Adrenal gland (tissue), 19 donors: ENCODE measurements at regions of chr11 and their contacts with region 1.

Region 1: DNA sequence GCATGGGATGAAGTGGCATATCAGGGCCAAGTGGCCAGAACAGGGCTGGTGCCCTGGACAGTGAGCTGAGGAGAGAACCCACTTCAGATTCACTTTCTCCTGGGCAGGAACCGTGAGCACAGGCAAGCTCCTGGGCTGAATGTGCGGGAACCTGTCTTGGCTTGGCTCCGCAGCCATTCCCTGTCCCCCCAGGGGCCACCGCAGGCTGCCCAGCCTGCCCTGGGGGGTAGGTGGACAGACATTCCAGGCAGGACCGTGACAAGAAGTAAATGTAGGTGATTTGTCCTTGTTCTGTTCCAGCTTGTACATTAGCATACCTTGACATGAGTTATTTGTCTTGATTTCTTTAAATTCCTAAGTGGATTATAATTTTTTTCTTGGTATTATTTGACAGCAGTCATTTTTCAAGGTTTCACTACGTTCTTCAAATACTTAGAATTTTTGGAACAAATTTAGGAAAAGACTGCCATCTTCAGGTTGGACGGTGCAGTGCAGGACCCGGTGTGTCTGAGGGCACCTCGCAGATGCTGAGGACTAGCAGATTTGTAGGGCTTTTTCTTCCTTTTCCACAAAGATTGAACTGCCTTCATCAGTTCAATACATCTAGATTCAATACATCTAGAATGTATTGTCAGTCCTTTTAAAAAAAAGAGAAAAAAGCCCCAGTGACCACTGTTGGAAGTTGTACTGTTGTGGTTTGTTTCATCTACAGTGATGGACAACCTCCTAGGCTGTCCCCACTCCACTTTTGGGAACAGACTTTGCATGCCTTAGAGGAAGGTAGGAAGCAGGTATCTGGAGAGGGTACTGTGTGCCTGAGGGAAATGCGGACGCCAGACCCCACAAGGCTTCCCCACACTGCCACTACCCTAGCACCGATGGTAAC is 115.1 kb upstream of the RASSF10 start:
- DNase-seq: peak; percentile 44 to 89 (median 72)
- H3K4me3 ChIP-seq: no peak overlapping the region
- H3K27ac ChIP-seq: peak overlapping the region in 1 of 5 donors; percentile 65
- H3K4me1 ChIP-seq: peaks cover 3 to 14% of the 10 kb centered on the region in 2 donors
- H3K27me3 ChIP-seq: no peaks in the 10 kb centered on the region
- CTCF ChIP-seq: peak; percentile 80 to 93 (median 84)
- POLR2A ChIP-seq: no peak

Region 2: GRCh38 chr11:12331239-12331874 is 562.7 kb before region 1 on chr11:
- intact Hi-C with region 1: loop called (anchors 5 kb)
- DNase-seq: peak; percentile 75 to 95 (median 86)
- H3K4me3 ChIP-seq: no peak overlapping the region
- H3K27ac ChIP-seq: peak overlapping the region in 1 of 5 donors; percentile 15
- H3K4me1 ChIP-seq: peaks cover 0 to 3% of the 10 kb centered on the region in 2 donors
- H3K27me3 ChIP-seq: no peaks in the 10 kb centered on the region
- CTCF ChIP-seq: peak; percentile 65 to 88 (median 80)
- POLR2A ChIP-seq: no peak

Region 3: DNA sequence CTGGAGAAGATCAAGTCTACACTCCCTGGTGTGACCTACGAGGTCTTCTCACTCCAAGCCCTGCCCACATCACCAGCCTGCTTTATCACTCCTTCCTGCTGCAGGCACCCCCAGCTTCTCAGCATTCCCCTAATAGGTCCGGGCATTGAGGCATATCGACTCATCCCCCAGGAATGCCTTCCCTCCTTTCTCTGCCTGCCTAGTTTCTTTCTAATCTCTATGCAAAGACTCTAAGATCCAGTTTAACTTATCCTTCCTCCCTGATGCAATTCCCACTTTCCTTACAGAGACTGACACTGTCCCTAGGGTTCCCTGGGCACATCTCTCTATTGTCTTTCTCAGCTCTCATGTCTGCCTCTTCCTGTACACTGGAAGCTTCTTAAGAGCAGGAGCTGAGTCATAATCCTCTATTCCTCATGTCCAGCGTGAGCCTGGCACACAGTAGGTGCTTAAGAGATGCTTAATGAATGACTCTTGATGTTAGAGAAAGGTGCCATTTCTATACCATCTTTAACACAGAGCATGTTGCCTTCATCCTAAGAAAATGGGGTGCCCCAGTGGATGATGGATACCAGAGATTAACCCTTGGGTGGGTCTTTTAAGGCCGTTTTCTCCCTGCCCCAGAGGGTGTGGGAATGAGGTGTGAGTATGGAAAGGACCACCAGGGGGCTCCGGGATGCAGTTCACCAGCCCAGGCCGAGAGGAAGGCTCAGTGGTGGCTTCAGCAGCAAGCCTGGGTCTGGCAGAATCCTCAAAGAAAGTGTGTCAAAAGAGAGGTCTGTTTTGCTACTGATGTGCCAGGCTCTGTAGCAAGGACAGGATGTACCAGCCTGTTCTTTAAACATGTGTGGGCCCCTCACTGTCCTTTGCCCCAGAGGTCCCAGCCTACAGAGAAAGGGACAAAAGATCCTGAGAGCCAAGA is 482.0 kb before region 1 on chr11:
- intact Hi-C with region 1: loop called in 1 of 2 experiments (anchors 10 kb)
- DNase-seq: peak; percentile 38 to 87 (median 65)
- H3K4me3 ChIP-seq: no peak overlapping the region
- H3K27ac ChIP-seq: peak overlapping the region in 2 of 5 donors; percentile 30 to 46
- H3K4me1 ChIP-seq: peaks cover 0 to 38% of the 10 kb centered on the region in 2 donors
- H3K27me3 ChIP-seq: no peaks in the 10 kb centered on the region
- CTCF ChIP-seq: peak; percentile 28 to 75 (median 60)
- POLR2A ChIP-seq: no peak